Activated naive CD4-positive, alpha-beta T cell treated with anti-CD3 and anti-CD28 coated beads for 36 hours (primary cell): ENCODE measurements at regions of chr3 and their contacts with region 1.

Region 1: GRCh38 chr3:143775459-143775858 is 72.8 kb downstream of the SLC9A9 start:
- DNase-seq: peak; percentile 25
- H3K4me3 Mint-ChIP-seq: no peak overlapping the region
- H3K27ac Mint-ChIP-seq: no peak overlapping the region
- H3K4me1 Mint-ChIP-seq: peaks cover 3% of the 10 kb centered on the region
- H3K27me3 Mint-ChIP-seq: no peaks in the 10 kb centered on the region

Region 2: DNA sequence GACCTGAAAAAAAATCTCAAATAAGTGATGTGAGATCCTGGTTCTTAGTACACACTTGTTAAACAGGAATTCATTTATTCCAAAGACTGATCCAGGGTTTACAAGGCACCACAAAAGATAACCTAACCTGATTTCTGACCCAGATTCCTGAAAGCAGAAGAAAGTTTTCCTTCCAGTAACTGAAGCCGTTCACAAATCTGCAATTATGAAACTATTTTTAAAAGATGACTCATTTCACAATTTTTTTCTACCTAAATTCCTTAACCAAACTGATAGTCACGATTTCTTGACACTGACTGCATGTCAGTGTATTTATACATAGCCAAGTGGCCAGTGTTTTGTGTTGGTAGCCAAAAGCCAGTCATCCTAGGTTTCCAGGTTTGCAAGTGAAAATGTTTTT is 55.7 kb after region 1 on chr3:
- CTCF ChIA-PET with region 1: interaction called, 5 read pairs
- intact Hi-C with region 1: loop called (anchors 1 kb)
- DNase-seq: peak; percentile 17
- H3K4me3 Mint-ChIP-seq: no peak overlapping the region
- H3K27ac Mint-ChIP-seq: no peak overlapping the region
- H3K4me1 Mint-ChIP-seq: peaks cover 37% of the 10 kb centered on the region
- H3K27me3 Mint-ChIP-seq: no peaks in the 10 kb centered on the region

Region 3: DNA sequence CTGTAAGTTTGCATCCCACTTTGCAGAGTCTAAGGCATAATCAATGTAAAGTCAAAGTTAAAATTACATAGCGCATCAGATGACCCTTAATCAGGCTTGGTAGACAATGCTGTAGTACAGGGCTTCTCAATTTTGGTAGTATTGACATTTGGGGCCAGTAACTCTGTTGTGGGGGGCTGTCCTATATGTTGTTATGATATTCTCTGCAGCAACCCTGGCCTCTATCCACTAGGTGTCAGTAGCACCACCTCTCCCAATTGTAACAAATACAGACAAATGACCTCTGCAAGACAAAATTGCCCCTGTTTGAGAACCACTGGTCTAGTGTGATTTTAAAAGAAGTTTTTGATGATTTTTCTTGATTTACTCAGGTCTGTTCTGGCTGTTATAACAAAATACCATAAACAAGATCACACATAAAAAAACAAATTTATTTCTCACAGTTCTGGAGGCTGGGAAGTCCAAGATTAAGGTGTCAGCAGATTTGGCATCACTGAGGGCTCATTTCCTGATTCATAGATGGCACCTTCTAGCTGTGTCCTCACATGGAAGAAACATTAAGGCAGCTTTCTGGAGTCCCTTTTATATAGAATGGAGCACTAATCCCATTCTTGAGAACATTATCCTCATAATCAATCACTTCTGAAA is 110.4 kb after region 1 on chr3:
- CTCF ChIA-PET with region 1: interaction called, 15 read pairs
- intact Hi-C with region 1: loop called (anchors 1 kb)
- DNase-seq: peak; percentile 45
- H3K4me3 Mint-ChIP-seq: no peak overlapping the region
- H3K27ac Mint-ChIP-seq: no peak overlapping the region
- H3K4me1 Mint-ChIP-seq: no peaks in the 10 kb centered on the region
- H3K27me3 Mint-ChIP-seq: no peaks in the 10 kb centered on the region

Region 4: GRCh38 chr3:143951351-143951971 is 176.0 kb after region 1 on chr3:
- CTCF ChIA-PET with region 1: interaction called, 6 read pairs
- intact Hi-C with region 1: loop called (anchors 1 kb)
- DNase-seq: peak; percentile 48
- H3K4me3 Mint-ChIP-seq: no peak overlapping the region
- H3K27ac Mint-ChIP-seq: no peak overlapping the region
- H3K4me1 Mint-ChIP-seq: no peaks in the 10 kb centered on the region
- H3K27me3 Mint-ChIP-seq: peaks cover 8% of the 10 kb centered on the region